ENCODE measurements at regions of chr9 and their contacts with region 1.

Region 1: DNA sequence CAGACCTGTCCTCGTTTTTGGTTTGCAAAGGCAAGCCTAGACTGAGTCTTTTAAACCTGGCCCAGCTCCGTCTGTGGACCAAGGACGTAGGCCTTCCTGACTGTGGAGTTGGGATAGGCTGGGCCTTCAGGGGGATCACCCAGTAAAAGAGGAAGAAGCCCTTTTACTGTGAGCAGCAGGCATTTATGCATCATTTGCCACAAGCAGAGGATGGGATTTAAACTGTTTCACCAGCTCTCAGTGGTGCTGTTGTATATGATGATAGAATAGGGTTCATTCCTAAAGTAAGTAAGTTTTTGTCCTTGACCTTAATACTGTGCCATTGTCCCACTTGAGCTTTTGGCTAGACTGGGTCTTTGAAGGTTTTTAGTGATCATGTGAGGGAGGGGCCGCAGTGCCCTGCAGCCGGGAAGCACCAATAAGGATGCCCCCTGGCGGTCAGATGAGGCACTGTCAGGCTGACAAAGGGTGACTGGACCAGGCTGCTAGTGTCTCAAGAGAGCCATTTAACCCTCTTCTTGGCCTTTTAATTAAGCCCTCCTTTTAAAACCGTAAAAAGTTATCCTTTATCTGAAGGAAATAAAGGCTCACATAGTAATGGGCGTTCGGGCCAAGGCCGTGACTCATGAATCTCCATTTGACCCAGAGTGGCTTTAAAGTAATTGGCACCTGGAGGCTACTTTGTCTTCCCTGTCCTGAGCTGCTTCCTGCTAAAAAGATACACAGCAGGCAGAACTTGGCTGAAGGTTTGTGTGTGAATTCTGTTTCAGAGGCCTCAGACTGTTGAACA is 74.0 kb downstream of the UBAP1 start:
- DNase-seq: peak; percentile 43
- H3K4me3 ChIP-seq: no peak overlapping the region
- H3K27ac ChIP-seq: peak overlapping the region; percentile 13 to 30
- H3K4me1 ChIP-seq: no peaks in the 10 kb centered on the region
- H3K27me3 ChIP-seq: no peaks in the 10 kb centered on the region
- CTCF ChIP-seq: peak; percentile 61 to 89 (median 84)
- POLR2A ChIP-seq: no peak

Region 2: DNA sequence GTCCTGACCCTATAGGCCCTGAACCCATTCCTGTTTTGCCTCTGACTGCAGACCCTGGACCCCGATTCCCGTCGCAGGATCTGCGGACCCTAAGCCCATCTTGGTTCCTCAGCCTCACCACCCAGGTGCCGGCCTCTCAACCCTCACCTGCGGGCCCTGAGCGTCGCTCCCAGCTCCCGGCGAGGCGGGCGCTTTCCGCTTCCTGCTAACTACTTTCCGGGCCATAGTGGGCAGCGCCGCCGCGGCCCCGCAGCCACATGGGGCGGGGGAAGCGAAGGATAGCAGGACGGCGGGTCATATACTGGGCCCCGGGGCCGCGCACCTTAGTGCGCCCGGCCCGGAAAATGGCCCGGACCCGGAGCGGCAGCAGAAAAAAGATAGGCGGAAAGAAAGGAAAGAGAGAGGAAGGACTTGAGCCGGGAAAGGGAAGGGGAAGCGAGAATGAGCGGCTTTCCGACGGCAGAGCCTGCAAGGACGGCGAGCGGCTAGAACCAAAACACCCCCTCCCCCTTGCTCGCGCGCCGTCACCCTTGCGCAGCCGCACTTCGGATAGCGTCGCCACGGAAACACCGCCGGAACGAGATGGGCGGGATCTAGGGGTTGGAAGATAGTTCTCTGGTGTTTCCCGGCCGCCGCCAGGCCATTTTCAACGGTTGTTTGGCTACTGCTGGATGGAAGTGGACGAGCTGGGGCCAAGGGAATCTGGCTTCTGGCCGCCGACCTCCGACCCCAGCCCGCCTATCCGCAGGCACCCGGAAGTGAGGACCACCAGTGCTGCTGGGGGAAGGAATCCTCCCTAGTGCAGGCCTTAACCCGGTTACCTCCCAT is 126.4 kb before region 1 on chr9 and contains the start of gene DCAF12:
- intact Hi-C with region 1: loop called (anchors 5 kb)
- DNase-seq: peak; percentile 84
- H3K4me3 ChIP-seq: peak within 1 kb of the TSS; percentile 61 to 71
- H3K27ac ChIP-seq: peak within 1 kb of the TSS; percentile 86 to 90
- H3K4me1 ChIP-seq: peaks cover 9% of the 10 kb centered on the region
- H3K27me3 ChIP-seq: no peaks in the 10 kb centered on the region
- CTCF ChIP-seq: peak in 1 of 4 experiments; percentile 3
- POLR2A ChIP-seq: peak; percentile 46
- total RNA-seq, gene DCAF12: 30.6 to 100 TPM

Region 3: GRCh38 chr9:34178520-34179212 is 74.2 kb before region 1 on chr9 and contains the start of gene UBAP1:
- intact Hi-C with region 1: loop called (anchors 2 kb)
- DNase-seq: peak; percentile 97
- H3K4me3 ChIP-seq: peak within 1 kb of the TSS; percentile 91 to 93
- H3K27ac ChIP-seq: peak within 1 kb of the TSS; percentile 97 to 99
- H3K4me1 ChIP-seq: no peaks in the 10 kb centered on the region
- H3K27me3 ChIP-seq: no peaks in the 10 kb centered on the region
- CTCF ChIP-seq: peak in 2 of 4 experiments; percentile 33
- POLR2A ChIP-seq: peak; percentile 99
- total RNA-seq, gene UBAP1: 38.3 to 72.2 TPM

Region 4: GRCh38 chr9:34376596-34377403 is 123.9 kb after region 1 on chr9 and contains the start of gene MYORG:
- intact Hi-C with region 1: loop called (anchors 5 kb)
- DNase-seq: peak; percentile 93
- H3K4me3 ChIP-seq: peak within 1 kb of the TSS; percentile 59 to 65
- H3K27ac ChIP-seq: peak within 1 kb of the TSS; percentile 71 to 75
- H3K4me1 ChIP-seq: peaks cover 7% of the 10 kb centered on the region
- H3K27me3 ChIP-seq: no peaks in the 10 kb centered on the region
- CTCF ChIP-seq: peak in 2 of 4 experiments; percentile 6 to 22
- POLR2A ChIP-seq: peak; percentile 85
- total RNA-seq, gene MYORG: 3.4 to 9.0 TPM

Measured in prostate gland (tissue), 2 donors.